ENCODE measurements at regions of chr3 and their contacts with region 1.

Region 1: DNA sequence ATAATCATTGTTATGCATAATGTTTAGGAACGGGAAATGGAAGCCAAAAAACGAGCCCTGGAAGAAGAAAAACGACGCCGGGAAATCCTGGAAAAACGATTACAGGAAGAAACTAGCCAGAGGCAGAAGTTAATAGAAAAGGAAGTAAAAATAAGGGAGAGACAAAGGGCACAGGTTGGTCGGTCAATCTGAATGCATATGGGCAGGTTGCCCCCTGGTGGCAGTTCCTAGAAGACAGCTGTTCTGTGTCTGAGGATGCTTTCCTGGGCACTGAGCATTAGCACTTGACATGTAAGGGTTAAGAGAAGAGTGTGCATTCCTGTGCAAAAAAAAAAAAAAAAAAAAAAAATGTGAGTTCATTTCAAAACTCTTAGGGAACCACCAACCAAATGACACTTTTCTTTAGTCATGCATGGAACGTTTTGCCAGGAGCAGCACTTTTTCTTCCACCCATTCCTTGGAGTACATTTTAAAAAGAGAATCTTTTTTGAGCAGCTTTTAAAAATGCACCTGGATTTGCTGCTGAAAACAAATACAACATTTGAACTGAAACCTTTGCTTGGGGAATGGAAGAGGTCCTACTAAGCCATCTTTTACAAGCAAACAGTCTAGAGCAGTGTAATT is 11.1 kb upstream of the ABHD10 start:
- DNase-seq: peak; percentile 90
- ATAC-seq: peak; percentile 85
- H3K4me3 Mint-ChIP-seq: no peak overlapping the region
- H3K27ac Mint-ChIP-seq: no peak overlapping the region
- H3K4me1 Mint-ChIP-seq: peaks cover 28% of the 10 kb centered on the region
- H3K27me3 Mint-ChIP-seq: no peaks in the 10 kb centered on the region

Region 2: DNA sequence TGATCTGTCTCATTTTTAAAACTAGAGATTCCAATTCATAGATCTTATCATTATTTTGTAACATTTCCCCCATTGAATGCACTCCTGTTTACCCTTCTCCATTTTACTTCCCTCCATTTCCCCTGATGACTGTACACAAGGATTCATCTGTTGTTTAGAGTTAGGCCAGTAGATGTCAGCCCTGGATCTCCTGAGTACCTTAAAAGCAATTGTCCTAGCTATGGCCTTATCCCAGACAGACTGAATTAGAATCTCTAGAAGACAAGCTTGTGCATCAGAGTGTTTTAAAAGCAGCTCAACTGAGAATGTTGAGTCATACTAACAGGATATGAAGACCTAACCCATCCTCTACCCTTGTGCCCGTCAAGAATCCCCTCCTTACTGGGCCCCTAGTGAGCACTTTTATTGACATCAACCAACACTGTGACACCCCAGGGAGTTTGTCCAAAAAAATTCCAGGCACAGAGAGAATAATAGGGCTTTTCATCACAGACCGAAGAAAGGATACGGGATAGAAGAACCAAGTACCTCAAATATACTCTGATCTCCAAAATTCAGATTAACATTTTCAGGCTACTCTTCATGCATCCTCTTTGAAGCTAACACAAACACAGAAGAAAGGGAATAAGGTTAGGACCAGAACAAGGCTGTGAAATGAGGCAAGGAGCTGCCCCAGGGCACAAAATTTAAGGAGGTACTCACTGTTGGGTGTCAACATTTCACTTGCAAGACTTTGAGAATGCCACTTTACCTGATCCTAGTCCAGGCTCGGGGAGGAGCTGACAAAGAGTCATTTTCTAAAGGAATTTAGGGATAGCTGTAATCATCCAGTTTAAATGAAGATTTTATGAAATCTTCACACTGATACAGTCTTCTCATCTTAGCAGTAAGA is 389.7 kb before region 1 on chr3:
- CTCF ChIA-PET with region 1: interaction called, 5 read pairs
- POLR2A ChIA-PET with region 1: no interaction called
- intact Hi-C with region 1: loop called (anchors 5 to 10 kb)
- DNase-seq: no peak
- ATAC-seq: peak; percentile 84
- H3K4me3 Mint-ChIP-seq: no peak overlapping the region
- H3K27ac Mint-ChIP-seq: peak overlapping the region; percentile 72
- H3K4me1 Mint-ChIP-seq: peaks cover 75% of the 10 kb centered on the region
- H3K27me3 Mint-ChIP-seq: no peaks in the 10 kb centered on the region

Region 3: GRCh38 chr3:111895079-111895478 is 72.7 kb before region 1 on chr3:
- CTCF ChIA-PET with region 1: interaction called, 6 read pairs
- POLR2A ChIA-PET with region 1: no interaction called
- intact Hi-C with region 1: loop called (anchors 2 kb)
- DNase-seq: no peak
- ATAC-seq: peak; percentile 47
- H3K4me3 Mint-ChIP-seq: no peak overlapping the region
- H3K27ac Mint-ChIP-seq: no peak overlapping the region
- H3K4me1 Mint-ChIP-seq: no peaks in the 10 kb centered on the region
- H3K27me3 Mint-ChIP-seq: no peaks in the 10 kb centered on the region

Region 4: GRCh38 chr3:111989061-111989678 is 21.4 kb after region 1 on chr3:
- CTCF ChIA-PET with region 1: interaction called, 13 read pairs
- POLR2A ChIA-PET with region 1: no interaction called
- intact Hi-C with region 1: no loop called
- DNase-seq: no peak
- ATAC-seq: peak; percentile 69
- H3K4me3 Mint-ChIP-seq: no peak overlapping the region
- H3K27ac Mint-ChIP-seq: no peak overlapping the region
- H3K4me1 Mint-ChIP-seq: peaks cover 36% of the 10 kb centered on the region
- H3K27me3 Mint-ChIP-seq: no peaks in the 10 kb centered on the region

Region 5: DNA sequence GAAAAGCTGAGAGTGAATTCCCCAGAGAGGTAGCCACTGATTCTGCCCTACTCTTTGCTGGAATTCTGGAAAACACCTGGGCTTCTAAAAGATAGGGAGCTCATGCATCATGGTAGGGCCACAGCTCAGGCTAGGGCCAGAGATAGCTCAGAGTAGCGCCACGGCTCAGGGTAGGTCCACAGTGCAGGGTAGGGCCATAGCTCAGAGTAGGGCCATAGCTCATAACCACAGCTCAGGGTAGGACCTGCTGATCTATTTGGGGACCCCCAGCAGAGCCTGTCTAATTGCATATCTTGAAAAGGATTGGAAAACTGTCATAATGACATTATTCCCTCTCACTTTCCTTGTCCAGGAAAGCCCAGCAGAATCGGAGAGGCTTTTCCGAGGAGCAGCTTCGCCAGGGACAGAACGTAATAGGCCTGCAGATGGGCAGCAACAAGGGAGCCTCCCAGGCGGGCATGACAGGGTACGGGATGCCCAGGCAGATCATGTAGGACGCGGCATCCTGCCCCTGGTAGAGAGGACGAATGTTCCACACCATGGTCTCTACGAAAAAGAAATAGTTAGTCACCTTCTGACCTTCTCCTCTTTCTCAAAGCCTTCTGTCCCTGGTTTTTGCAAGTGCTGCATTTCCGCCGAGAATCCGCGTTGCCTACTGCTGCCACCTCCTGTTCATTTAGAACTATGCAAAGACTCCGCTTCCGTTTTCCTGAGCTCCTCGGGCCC is 45.5 kb after region 1 on chr3:
- CTCF ChIA-PET with region 1: interaction called, 52 read pairs
- POLR2A ChIA-PET with region 1: no interaction called
- intact Hi-C with region 1: loop called (anchors 1 kb)
- DNase-seq: peak; percentile 82
- ATAC-seq: peak; percentile 96
- H3K4me3 Mint-ChIP-seq: no peak overlapping the region
- H3K27ac Mint-ChIP-seq: peak overlapping the region; percentile 29
- H3K4me1 Mint-ChIP-seq: peaks cover 20% of the 10 kb centered on the region
- H3K27me3 Mint-ChIP-seq: no peaks in the 10 kb centered on the region